Ascending aorta (tissue), 2 donors: ENCODE measurements at regions of chrX and their contacts with region 1.

Region 1: DNA sequence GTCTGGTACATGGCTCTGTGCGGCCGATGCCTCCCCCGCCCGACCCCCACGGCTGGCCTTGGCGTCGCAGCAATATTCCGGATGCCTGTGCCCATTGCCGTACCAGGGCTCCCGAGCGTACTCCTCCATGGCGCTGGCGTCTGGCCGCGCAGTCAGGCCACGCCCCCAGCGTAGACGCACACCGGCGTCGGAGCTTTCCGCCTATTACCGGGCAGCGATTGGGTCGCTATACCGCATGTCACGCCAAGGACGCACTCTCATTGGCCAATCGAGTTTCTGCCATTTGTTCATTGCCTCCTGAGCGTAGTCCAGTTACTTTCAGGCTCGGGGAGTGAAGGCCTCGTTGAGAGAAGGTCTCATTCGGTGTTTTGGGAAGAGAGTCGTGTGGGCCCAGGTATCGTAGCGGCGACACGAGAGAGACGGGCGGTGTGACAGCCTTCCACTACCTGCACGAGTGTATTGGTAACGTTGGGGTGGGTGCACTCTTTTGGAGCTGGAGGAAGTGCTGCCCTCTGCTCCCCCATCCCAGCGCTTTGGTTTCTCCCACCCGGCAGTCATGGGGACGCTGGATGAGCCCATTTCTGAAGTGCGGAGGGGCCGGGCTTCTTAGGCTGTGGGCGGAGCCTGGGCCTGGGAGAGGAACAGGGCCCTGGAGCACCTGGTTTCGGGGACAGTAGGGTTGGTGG is at the starts of genes PQBP1 and TIMM17B:
- DNase-seq: peak; percentile 72 to 93
- H3K4me3 ChIP-seq: peak within 1 kb of the TSS; percentile 60 to 69
- H3K27ac ChIP-seq: peak within 1 kb of the TSS; percentile 94 to 97
- H3K4me1 ChIP-seq: peaks cover 3 to 9% of the 10 kb centered on the region in 2 donors
- H3K27me3 ChIP-seq: no peaks in the 10 kb centered on the region
- CTCF ChIP-seq: no peak
- total RNA-seq, gene PQBP1: 14.8 TPM
- total RNA-seq, gene TIMM17B: 15.3 TPM

Region 2: DNA sequence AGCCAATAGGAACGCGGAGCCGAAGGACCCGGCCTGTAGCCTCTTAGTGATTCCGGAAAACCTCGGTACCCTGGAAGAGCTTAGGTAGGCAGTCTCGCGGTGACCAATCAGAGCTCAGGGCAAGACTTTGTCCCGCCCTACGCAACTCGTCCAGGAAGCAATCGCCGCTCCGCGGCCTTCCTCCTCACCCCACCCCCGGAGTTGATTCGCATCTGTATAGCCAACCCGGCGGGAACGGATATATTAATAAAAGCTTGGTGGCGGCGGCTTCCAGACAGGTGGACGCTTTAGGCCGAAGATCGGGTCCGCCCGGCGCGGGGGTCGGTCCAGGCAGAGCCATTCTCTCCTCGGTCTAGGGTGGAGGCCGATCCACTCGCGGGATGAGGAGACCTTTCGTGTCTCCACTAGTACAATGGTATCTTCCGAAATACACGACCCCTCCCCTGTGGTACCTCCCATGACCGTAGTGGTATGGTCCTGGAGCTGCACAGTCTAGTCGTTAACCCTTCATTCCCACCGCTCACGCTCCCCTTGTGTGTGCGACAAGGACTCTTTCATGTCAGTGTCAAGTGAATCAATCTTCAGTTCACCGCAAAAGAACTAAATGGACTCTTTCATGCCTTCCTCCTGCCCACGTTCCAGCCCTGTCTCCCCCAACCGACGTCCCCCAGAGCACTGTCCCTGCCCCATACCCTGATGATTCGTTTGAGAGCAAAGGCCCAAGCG is 160.4 kb before region 1 on chrX:
- intact Hi-C with region 1: loop called (anchors 2 kb)
- DNase-seq: peak; percentile 67 to 94
- H3K4me3 ChIP-seq: peak overlapping the region; percentile 56 to 67
- H3K27ac ChIP-seq: peak overlapping the region; percentile 84 to 85
- H3K4me1 ChIP-seq: no peaks in the 10 kb centered on the region
- H3K27me3 ChIP-seq: no peaks in the 10 kb centered on the region
- CTCF ChIP-seq: no peak